ENCODE measurements at regions of chr5 and their contacts with region 1.

Region 1: DNA sequence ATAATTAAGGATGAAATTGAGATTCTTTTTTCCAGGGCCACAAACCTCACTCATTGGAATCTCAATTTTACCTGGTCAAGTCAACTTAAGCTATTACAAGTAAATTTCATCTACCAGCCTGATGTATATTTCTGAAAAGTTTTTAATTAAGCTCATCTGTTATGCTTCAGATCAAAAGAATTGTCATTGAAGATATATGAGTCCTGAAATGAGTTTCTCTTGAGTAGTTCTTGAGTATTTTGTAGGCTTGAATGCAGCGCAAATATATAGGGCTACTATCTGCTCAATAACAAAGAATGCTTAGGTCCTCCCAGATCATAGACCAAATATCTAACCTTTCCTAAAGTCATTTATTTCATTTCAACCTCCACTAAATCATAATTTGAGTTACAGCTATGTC is 482.2 kb upstream of the ST8SIA4 start:
- DNase-seq: no peak
- ATAC-seq: no peak
- H3K4me3 ChIP-seq: no peak overlapping the region
- H3K4me3 Mint-ChIP-seq: no peak overlapping the region
- H3K27ac ChIP-seq: no peak overlapping the region
- H3K27ac Mint-ChIP-seq: no peak overlapping the region
- H3K4me1 ChIP-seq: no peaks in the 10 kb centered on the region
- H3K4me1 Mint-ChIP-seq: no peaks in the 10 kb centered on the region
- H3K27me3 ChIP-seq: peaks cover 0 to 8% of the 10 kb centered on the region in 2 experiments
- H3K27me3 Mint-ChIP-seq: peaks cover 6% of the 10 kb centered on the region
- CTCF ChIP-seq: no peak

Region 2: DNA sequence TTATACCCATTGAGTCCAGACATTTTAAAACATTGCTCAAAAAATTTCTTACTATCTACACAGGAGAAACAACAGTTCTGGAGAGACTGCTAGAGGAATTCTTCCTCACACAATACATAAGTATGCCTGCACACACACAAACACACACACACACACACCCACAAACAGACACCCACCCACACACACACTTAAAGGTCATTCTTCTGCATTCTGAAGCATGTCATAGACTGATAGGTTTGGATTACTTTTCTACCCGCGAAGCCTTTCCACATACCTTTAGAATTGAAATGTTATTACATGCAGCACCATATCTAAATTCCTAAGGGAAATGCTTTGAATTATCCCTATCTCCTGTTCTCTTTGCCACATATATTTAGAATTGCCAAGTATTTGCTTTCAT is 769.9 kb before region 1 on chr5:
- CTCF ChIA-PET with region 1: no interaction called
- POLR2A ChIA-PET with region 1: no interaction called
- intact Hi-C with region 1: loop called in 1 of 2 experiments (anchors 5 kb)
- DNase-seq: no peak
- ATAC-seq: no peak
- H3K4me3 ChIP-seq: no peak overlapping the region
- H3K4me3 Mint-ChIP-seq: no peak overlapping the region
- H3K27ac ChIP-seq: no peak overlapping the region
- H3K27ac Mint-ChIP-seq: no peak overlapping the region
- H3K4me1 ChIP-seq: no peaks in the 10 kb centered on the region
- H3K4me1 Mint-ChIP-seq: no peaks in the 10 kb centered on the region
- H3K27me3 ChIP-seq: no peaks in the 10 kb centered on the region
- H3K27me3 Mint-ChIP-seq: peaks cover 5% of the 10 kb centered on the region
- CTCF ChIP-seq: no peak

Region 3: GRCh38 chr5:101326766-101327165 is 58.5 kb before region 1 on chr5:
- CTCF ChIA-PET with region 1: no interaction called
- POLR2A ChIA-PET with region 1: no interaction called
- intact Hi-C with region 1: no loop called
- DNase-seq: no peak
- ATAC-seq: no peak
- H3K4me3 ChIP-seq: no peak overlapping the region
- H3K4me3 Mint-ChIP-seq: no peak overlapping the region
- H3K27ac ChIP-seq: no peak overlapping the region
- H3K27ac Mint-ChIP-seq: no peak overlapping the region
- H3K4me1 ChIP-seq: no peaks in the 10 kb centered on the region
- H3K4me1 Mint-ChIP-seq: no peaks in the 10 kb centered on the region
- H3K27me3 ChIP-seq: no peaks in the 10 kb centered on the region
- H3K27me3 Mint-ChIP-seq: no peaks in the 10 kb centered on the region
- CTCF ChIP-seq: no peak

Region 4: DNA sequence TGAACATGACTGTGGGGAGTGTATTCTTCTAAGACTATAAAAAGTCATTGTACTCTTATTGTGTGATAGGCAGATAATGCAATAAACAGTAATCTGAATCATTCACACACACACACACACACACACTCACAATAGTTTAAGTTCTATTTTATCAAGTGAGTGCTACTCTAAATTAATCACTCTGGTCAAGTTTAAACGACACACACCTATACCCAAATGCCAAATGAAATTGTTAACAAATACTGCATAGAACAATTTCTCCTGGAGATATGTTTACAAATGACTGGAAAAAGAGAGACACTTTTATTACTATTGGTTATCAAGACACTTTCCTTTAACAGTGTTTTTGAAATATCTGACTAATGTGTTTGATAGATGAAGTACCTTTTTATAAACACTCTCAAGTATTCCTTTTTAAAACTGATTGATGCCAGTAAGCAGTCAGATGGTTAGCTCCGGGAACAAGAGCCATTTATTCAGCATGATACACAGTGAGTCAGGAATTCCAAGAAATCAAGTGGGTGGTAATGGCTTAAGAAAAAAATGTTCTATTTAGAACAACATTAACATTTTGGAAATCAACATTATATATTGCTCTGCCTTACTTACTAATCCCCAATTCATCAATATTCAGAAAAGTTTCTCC is 39.4 kb after region 1 on chr5:
- CTCF ChIA-PET with region 1: no interaction called
- POLR2A ChIA-PET with region 1: no interaction called
- intact Hi-C with region 1: no loop called
- DNase-seq: no peak
- ATAC-seq: no peak
- H3K4me3 ChIP-seq: no peak overlapping the region
- H3K4me3 Mint-ChIP-seq: no peak overlapping the region
- H3K27ac ChIP-seq: no peak overlapping the region
- H3K27ac Mint-ChIP-seq: no peak overlapping the region
- H3K4me1 ChIP-seq: no peaks in the 10 kb centered on the region
- H3K4me1 Mint-ChIP-seq: no peaks in the 10 kb centered on the region
- H3K27me3 ChIP-seq: no peaks in the 10 kb centered on the region
- H3K27me3 Mint-ChIP-seq: no peaks in the 10 kb centered on the region
- CTCF ChIP-seq: no peak

Measured in CD4-positive, alpha-beta T cell (primary cell).